HCT116 (cell line): ENCODE measurements at regions of chr2 and their contacts with region 1.

Region 1: DNA sequence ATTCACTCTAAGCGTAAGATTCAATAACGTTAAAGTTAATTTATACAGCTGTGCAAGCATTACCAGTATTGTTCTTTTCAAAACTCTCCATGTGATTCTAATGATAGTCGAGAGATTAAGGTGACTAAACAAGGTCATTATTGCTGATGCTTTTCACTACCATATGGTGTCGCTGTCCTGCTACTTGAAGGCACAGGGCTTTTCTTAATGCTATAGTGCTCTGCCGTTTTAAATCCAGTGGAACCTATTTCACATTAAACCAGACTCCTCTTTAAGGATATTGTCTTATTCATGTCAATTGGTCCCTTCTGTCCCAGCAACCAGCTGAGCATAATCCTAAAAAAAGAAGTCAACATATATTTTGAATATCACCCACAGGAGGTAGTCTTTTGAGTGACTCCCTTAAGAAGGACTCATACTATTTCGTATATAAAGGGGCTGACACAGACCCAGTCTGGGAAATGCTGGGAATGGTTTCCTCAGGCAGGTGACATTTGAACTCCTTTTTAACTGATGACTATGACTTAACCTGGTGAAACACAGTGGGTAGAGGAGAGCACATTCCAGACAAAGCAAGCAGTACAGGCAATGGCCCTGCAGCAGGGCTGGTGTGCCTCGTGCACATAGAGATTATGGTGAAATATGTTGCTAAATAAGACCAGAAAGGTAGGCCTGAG is 53.9 kb upstream of the CYTIP start:
- DNase-seq: peak; percentile 13
- ATAC-seq: peak; percentile 97
- H3K4me3 ChIP-seq: no peak overlapping the region
- H3K27ac ChIP-seq: no peak overlapping the region
- H3K4me1 ChIP-seq: no peaks in the 10 kb centered on the region
- H3K27me3 ChIP-seq: no peaks in the 10 kb centered on the region
- CTCF ChIP-seq: peak; percentile 75 to 86 (median 76)
- POLR2A ChIP-seq: no peak
- RAD21 ChIP-seq: peak; percentile 83

Region 2: DNA sequence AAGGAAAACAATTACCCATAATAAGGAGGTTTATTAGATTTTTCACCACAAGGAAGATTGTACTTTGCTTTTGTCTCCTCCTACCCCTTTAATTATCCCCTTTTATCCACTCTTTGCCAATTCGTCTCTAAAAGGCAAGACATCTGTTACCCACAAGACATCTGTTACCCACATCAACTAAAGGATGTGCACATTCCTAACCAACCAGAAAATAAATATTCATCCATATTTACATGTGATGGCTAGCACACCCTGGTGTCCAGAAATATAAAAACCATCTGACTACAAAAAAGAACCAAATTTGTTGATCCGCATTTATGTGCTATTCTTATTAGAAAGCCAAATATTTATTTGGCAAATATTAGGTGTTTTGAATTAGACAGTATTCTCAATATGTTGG is 95.2 kb after region 1 on chr2:
- CTCF ChIA-PET with region 1: no interaction called
- POLR2A ChIA-PET with region 1: no interaction called
- RAD21 ChIA-PET with region 1: no interaction called
- intact Hi-C with region 1: loop called (anchors 5 kb)
- DNase-seq: no peak
- ATAC-seq: peak; percentile 50; the same call in 1 of the 2 replicates
- H3K4me3 ChIP-seq: no peak overlapping the region
- H3K27ac ChIP-seq: no peak overlapping the region
- H3K4me1 ChIP-seq: no peaks in the 10 kb centered on the region
- H3K27me3 ChIP-seq: no peaks in the 10 kb centered on the region
- CTCF ChIP-seq: peak; percentile 6 to 53 (median 22); a peak in 2 of 6 replicates
- POLR2A ChIP-seq: no peak
- RAD21 ChIP-seq: peak; percentile 29

Region 3: DNA sequence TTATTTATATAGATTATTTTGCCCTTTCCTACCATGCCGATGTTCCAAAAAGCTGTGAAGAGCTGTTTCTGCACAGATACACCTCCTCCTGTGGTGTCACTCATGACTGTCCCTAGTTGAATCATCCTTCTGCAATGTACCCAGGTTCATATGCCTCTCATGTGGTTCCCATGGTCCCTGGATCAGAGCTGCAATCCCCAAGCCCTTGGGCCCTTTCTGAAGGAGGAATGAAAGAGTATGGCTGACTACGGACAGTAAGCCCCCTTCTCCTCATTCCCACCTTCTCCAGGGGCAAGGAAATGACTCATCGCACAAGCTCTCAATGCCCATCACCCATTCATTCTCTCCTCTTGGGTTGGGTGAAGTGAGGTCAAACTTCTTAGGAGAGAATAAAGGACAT is 442.2 kb after region 1 on chr2:
- CTCF ChIA-PET with region 1: no interaction called
- POLR2A ChIA-PET with region 1: no interaction called
- RAD21 ChIA-PET with region 1: no interaction called
- intact Hi-C with region 1: no loop called
- DNase-seq: no peak
- ATAC-seq: peak; percentile 69; the same call in 1 of the 2 replicates
- H3K4me3 ChIP-seq: no peak overlapping the region
- H3K27ac ChIP-seq: no peak overlapping the region
- H3K4me1 ChIP-seq: peaks cover 0 to 6% of the 10 kb centered on the region in 2 experiments; a peak in 3 of 4 replicates
- H3K27me3 ChIP-seq: no peaks in the 10 kb centered on the region
- CTCF ChIP-seq: no peak
- POLR2A ChIP-seq: no peak
- RAD21 ChIP-seq: no peak